A673 (cell line): ENCODE measurements at regions of chrX and their contacts with region 1.

Region 1: DNA sequence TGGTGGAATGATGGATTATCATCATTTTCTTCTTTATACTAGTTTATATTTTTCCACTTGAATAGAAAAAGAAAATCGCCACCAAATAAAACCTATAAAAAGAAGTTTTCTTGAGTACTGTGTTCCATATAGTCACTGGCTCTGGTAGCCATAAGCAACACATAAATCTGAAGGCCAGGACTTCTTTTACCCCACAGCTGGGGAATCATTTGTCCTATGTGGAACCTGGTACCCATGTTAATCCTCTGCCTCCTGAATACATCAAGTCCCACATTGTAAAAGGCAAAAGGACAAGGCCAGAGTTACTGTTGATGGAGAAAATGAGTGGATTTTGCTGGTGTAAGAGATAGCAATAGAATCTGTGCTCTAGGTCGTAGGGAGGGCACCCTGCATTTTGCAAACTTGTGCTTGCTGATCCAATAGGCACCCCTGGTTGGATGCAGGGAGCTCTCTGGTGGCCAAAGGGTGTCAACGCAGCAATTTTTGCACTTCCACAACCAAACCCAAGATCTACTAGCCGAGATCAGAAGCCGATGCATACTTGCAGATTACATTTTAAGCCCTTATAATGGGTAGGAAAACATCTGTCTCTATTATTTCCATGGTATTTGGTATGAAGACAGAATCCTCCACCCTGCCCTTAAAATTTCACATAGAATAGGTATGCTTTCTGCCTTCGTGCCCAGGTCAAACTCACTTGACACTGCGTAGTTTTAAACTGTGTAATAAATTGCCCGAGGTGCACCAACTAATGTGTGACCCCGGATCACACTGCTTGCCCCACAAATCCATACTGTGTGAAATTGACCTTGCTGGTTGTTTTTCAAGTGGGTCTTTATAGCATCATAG is 146.2 kb upstream of the SCML1 start:
- DNase-seq: peak; percentile 65
- H3K4me3 ChIP-seq: no peak overlapping the region
- H3K27ac ChIP-seq: no peak overlapping the region
- H3K4me1 ChIP-seq: no peaks in the 10 kb centered on the region
- H3K27me3 ChIP-seq: no peaks in the 10 kb centered on the region
- CTCF ChIP-seq: peak; percentile 76

Region 2: GRCh38 chrX:17242470-17242869 is 348.6 kb before region 1 on chrX:
- CTCF ChIA-PET with region 1: interaction called, 7 read pairs
- POLR2A ChIA-PET with region 1: no interaction called
- intact Hi-C with region 1: loop called (anchors 2 kb)
- DNase-seq: peak; percentile 62
- H3K4me3 ChIP-seq: no peak overlapping the region
- H3K27ac ChIP-seq: no peak overlapping the region
- H3K4me1 ChIP-seq: no peaks in the 10 kb centered on the region
- H3K27me3 ChIP-seq: peaks cover 9% of the 10 kb centered on the region
- CTCF ChIP-seq: peak; percentile 86

Region 3: GRCh38 chrX:17535229-17535628 is 55.9 kb before region 1 on chrX:
- CTCF ChIA-PET with region 1: no interaction called
- POLR2A ChIA-PET with region 1: no interaction called
- intact Hi-C with region 1: loop called (anchors 1 kb)
- DNase-seq: peak; percentile 57
- H3K4me3 ChIP-seq: no peak overlapping the region
- H3K27ac ChIP-seq: no peak overlapping the region
- H3K4me1 ChIP-seq: no peaks in the 10 kb centered on the region
- H3K27me3 ChIP-seq: no peaks in the 10 kb centered on the region
- CTCF ChIP-seq: peak; percentile 66

Region 4: DNA sequence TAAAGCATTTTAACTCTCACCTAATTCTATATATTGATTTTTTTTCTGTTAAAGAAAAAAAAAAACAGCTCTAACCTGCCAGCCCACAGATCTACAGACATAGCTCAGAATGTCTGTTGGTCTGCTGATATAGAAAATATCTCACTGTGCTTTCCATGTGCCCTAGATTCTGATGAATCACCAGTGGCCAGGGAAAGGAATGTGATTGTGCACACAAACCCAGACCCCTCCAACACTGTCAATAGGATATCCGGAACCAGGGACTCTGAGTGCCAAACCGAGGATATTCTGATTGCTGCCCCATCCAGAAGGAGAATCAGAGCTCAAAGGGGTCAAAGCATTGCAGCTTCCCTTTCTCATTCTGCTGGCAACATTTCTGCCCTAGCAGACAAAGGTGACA is 134.1 kb after region 1 on chrX:
- CTCF ChIA-PET with region 1: no interaction called
- POLR2A ChIA-PET with region 1: no interaction called
- intact Hi-C with region 1: no loop called
- DNase-seq: no peak
- H3K4me3 ChIP-seq: no peak overlapping the region
- H3K27ac ChIP-seq: no peak overlapping the region
- H3K4me1 ChIP-seq: no peaks in the 10 kb centered on the region
- H3K27me3 ChIP-seq: peaks cover 34% of the 10 kb centered on the region
- CTCF ChIP-seq: no peak